ENCODE measurements at regions of chr12 and their contacts with region 1.

Region 1: DNA sequence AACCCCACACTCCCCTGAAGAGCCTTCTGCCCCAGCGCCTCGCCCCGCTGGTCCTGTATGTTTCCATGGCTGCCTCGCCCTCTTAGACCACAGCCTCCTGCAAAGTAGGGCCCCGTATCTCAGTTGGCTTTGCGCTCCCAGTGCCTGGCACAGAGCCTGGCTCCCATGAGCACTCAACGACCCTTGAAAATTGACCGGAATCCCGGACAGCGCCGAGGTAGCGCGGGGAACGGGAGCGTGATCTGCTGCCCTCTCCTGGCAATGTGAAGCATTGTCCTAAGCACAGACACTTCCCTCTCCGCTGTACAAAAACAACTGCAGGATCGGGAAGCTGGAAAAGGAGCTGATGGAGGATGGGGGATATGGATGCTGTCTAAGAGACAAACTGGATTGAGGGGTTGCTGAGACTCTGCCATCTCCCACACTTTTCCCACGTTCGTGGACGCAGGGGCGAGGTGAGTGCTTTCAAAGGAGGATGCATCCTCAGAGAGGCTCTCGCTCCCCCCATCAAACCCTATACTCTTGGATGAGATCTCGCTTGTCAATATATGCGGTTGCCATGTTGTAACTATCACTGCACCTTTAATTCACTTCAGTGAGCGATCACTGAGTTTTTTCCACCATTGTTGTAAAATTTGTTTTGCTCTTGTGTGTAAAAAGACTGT is 10.7 kb upstream of the FKBP4 start:
- DNase-seq: peak; percentile 59
- ATAC-seq: peak; percentile 93
- H3K4me3 ChIP-seq: peak overlapping the region; percentile 31
- H3K27ac ChIP-seq: no peak overlapping the region
- H3K4me1 ChIP-seq: peaks cover 5% of the 10 kb centered on the region; the same call in 1 of the 2 replicates
- H3K27me3 ChIP-seq: peaks cover 37% of the 10 kb centered on the region
- CTCF ChIP-seq: peak; percentile 88

Region 2: DNA sequence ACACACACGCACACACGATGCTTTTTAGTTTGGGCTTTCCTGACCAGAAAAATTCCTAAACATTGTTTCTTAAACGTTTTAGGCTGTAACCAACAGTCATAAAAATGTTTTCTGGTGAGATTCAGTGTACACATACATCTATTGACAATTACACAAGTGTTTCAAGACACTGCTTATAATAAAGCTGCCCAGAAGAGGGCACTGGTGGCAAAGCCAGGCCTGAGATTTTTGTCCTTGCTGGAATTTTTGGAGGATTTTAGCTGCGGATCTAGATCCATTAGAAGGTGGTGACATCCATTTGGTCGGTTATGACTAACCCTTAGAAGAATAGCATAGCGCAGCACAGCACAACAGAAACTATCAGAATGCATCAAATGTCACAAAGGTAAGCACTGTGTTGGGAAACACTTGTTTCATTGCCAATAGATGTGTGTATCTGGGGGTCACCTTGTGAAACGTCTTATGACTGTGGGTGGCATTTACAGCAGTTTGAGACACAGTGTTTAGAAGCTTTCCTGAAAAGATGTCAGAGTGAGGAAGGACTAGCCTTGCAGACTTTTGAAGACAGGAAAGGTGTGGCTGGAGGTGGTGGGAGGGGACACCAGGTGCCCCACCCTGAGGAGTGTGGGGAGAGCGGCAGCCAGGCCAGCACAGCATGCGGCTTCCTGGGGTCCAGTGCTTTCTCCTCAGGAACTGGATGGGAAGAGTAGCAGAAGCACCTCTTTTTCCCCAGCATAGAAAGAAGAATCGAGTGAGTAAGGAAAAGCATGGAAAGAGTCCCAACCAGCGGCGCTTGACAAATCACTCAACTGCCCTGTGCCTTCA is 44.0 kb before region 1 on chr12:
- CTCF ChIA-PET with region 1: interaction called, 4 read pairs
- POLR2A ChIA-PET with region 1: no interaction called
- intact Hi-C with region 1: loop called (anchors 1 kb)
- DNase-seq: peak; percentile 64
- ATAC-seq: peak; percentile 49
- H3K4me3 ChIP-seq: no peak overlapping the region
- H3K27ac ChIP-seq: no peak overlapping the region
- H3K4me1 ChIP-seq: no peaks in the 10 kb centered on the region
- H3K27me3 ChIP-seq: peaks cover 57% of the 10 kb centered on the region
- CTCF ChIP-seq: peak; percentile 71

Region 3: GRCh38 chr12:2924019-2924418 is 140.0 kb after region 1 on chr12:
- CTCF ChIA-PET with region 1: no interaction called
- POLR2A ChIA-PET with region 1: no interaction called
- intact Hi-C with region 1: no loop called
- DNase-seq: peak; percentile 61
- ATAC-seq: peak; percentile 87
- H3K4me3 ChIP-seq: no peak overlapping the region
- H3K27ac ChIP-seq: no peak overlapping the region
- H3K4me1 ChIP-seq: peaks cover 9% of the 10 kb centered on the region
- H3K27me3 ChIP-seq: no peaks in the 10 kb centered on the region
- CTCF ChIP-seq: no peak